ENCODE measurements at regions of chr17 and their contacts with region 1.

Region 1: GRCh38 chr17:82418001-82418986 is at the starts of genes HEXD and OGFOD3:
- DNase-seq: peak; percentile 68
- ATAC-seq: peak; percentile 87
- H3K4me3 ChIP-seq: peak within 1 kb of the TSS; percentile 65 to 81
- H3K27ac ChIP-seq: peak within 1 kb of the TSS; percentile 98
- H3K4me1 ChIP-seq: peaks cover 7 to 23% of the 10 kb centered on the region in 2 experiments
- H3K27me3 ChIP-seq: no peaks in the 10 kb centered on the region
- CTCF ChIP-seq: no peak
- POLR2A ChIP-seq: peak; percentile 90
- RAD21 ChIP-seq: no peak
- total RNA-seq, gene HEXD: 45.2 TPM
- total RNA-seq, gene OGFOD3: 53.6 TPM

Region 2: DNA sequence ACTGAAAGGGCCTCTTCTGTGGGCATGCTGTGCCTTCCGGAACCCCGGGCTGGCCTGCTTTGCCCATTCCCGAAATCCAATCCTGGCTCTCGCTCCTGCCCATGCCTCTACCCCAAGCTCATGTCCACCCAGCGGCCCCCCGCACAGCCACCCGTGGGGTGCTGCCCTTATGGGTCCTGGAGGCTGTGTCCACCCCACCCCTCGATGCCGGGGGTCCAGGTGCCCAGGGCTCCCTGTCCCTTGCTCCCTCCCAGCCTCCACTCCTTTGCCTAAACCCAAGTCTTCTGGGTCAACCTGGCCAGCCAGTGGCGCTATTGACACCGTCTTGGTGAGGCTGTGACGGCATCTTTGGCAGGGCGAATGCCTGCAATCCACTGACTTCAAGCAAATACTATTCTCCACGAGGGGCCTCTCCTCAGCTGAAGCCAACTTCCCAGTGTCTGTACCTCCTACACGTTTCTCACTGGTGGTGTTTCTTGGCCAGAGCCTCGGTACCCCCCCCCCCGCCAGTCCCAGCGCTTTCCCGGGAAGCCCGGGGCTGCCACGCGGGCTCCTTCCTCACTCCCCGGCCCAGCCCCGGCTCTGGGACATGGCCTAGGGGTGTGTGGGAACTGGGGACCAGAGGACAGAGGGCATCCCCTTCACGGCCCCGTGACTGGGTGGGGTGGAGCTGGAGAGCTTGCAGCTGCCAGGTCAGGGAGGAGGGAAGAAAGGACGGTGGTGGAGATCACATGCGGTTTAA is 340.5 kb before region 1 on chr17:
- CTCF ChIA-PET with region 1: no interaction called
- POLR2A ChIA-PET with region 1: no interaction called
- RAD21 ChIA-PET with region 1: no interaction called
- intact Hi-C with region 1: no loop called
- DNase-seq: no peak
- ATAC-seq: peak; percentile 16
- H3K4me3 ChIP-seq: no peak overlapping the region
- H3K27ac ChIP-seq: no peak overlapping the region
- H3K4me1 ChIP-seq: no peaks in the 10 kb centered on the region
- H3K27me3 ChIP-seq: no peaks in the 10 kb centered on the region
- CTCF ChIP-seq: no peak; a peak in 1 of 6 replicates
- POLR2A ChIP-seq: no peak
- RAD21 ChIP-seq: no peak

Region 3: GRCh38 chr17:82244413-82245140 is 173.7 kb before region 1 on chr17:
- CTCF ChIA-PET with region 1: no interaction called
- POLR2A ChIA-PET with region 1: no interaction called
- RAD21 ChIA-PET with region 1: no interaction called
- intact Hi-C with region 1: loop called (anchors 1 kb)
- DNase-seq: no peak
- ATAC-seq: no peak
- H3K4me3 ChIP-seq: no peak overlapping the region
- H3K27ac ChIP-seq: peak overlapping the region; percentile 31
- H3K4me1 ChIP-seq: peaks cover 25 to 63% of the 10 kb centered on the region in 2 experiments
- H3K27me3 ChIP-seq: no peaks in the 10 kb centered on the region
- CTCF ChIP-seq: peak in 2 of 3 experiments; percentile 57 to 87; a peak in 5 of 6 replicates
- POLR2A ChIP-seq: no peak
- RAD21 ChIP-seq: peak; percentile 83

Region 4: GRCh38 chr17:82297714-82298537 is 120.4 kb before region 1 on chr17:
- CTCF ChIA-PET with region 1: interaction called, 3 read pairs
- POLR2A ChIA-PET with region 1: no interaction called
- RAD21 ChIA-PET with region 1: interaction called in 1 of 2 experiments, 7 read pairs
- intact Hi-C with region 1: loop called (anchors 2 kb)
- DNase-seq: no peak
- ATAC-seq: peak; percentile 64
- H3K4me3 ChIP-seq: peak overlapping the region; percentile 52 to 62
- H3K27ac ChIP-seq: peak overlapping the region; percentile 89
- H3K4me1 ChIP-seq: peaks cover 35 to 64% of the 10 kb centered on the region in 2 experiments
- H3K27me3 ChIP-seq: no peaks in the 10 kb centered on the region
- CTCF ChIP-seq: no peak
- POLR2A ChIP-seq: no peak
- RAD21 ChIP-seq: no peak

Region 5: DNA sequence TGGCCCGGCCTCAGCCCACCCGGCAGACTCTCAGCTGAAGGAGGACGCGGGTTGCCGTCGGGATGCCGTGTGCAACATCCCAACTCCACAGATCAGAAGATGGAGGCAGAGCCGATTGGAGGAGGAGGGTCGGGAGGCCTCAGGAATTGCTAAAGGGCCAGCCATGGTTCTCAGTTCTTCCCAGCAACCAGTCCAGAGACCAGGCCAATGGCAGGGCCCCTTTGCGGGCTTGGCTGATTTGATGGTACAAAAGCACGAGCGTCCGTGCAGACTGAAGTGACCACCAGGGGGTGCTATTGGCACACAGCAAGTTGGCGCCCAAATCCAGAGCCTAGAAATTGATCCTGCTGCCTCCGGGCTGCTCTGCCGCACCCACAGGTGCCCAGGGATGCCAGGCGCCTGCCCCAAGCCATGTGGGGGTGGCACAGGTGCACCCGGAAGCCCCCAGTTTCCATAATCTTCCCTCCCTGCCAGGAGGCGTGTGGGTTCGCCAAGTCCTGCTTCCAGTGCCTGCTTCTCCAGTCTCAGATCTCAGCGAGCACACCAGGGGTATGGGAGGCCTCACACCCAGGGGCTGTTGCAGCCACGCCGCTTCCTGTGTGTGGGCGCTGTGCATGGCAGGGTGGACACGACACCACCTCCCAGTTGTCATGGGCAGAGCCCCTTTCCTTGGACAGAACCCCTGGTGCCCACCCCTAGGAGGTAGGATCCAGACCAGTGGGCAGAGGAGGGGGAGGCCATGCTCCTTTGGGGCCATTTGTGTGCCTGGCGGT is 66.4 kb before region 1 on chr17:
- CTCF ChIA-PET with region 1: interaction called, 7 read pairs
- POLR2A ChIA-PET with region 1: no interaction called
- RAD21 ChIA-PET with region 1: no interaction called
- intact Hi-C with region 1: loop called (anchors 1 kb)
- DNase-seq: peak; percentile 91
- ATAC-seq: peak; percentile 92
- H3K4me3 ChIP-seq: no peak overlapping the region
- H3K27ac ChIP-seq: no peak overlapping the region
- H3K4me1 ChIP-seq: peaks cover 2 to 19% of the 10 kb centered on the region in 2 experiments; a peak in 3 of 4 replicates
- H3K27me3 ChIP-seq: no peaks in the 10 kb centered on the region
- CTCF ChIP-seq: peak; percentile 97 to 99 (median 98)
- POLR2A ChIP-seq: no peak
- RAD21 ChIP-seq: peak; percentile 100

Region 6: GRCh38 chr17:83109793-83110645 is 691.7 kb after region 1 on chr17:
- CTCF ChIA-PET with region 1: no interaction called
- POLR2A ChIA-PET with region 1: no interaction called
- RAD21 ChIA-PET with region 1: no interaction called
- intact Hi-C with region 1: no loop called
- DNase-seq: peak; percentile 76
- ATAC-seq: peak; percentile 96
- H3K4me3 ChIP-seq: peak overlapping the region; percentile 44 to 61
- H3K27ac ChIP-seq: peak overlapping the region; percentile 21; the same call in 1 of the 2 replicates
- H3K4me1 ChIP-seq: peaks cover 13 to 22% of the 10 kb centered on the region in 2 experiments
- H3K27me3 ChIP-seq: peaks cover 3% of the 10 kb centered on the region; the same call in 1 of the 2 replicates
- CTCF ChIP-seq: no peak
- POLR2A ChIP-seq: no peak
- RAD21 ChIP-seq: no peak